ENCODE measurements at regions of chr9 and their contacts with region 1.

Region 1: GRCh38 chr9:32579706-32580331 is 6.9 kb upstream of the NDUFB6 start:
- DNase-seq: peak; percentile 67
- ATAC-seq: no peak
- H3K4me3 ChIP-seq: no peak overlapping the region
- H3K27ac ChIP-seq: no peak overlapping the region
- H3K4me1 ChIP-seq: no peaks in the 10 kb centered on the region; the same call in 1 of the 2 replicates
- H3K27me3 ChIP-seq: no peaks in the 10 kb centered on the region
- CTCF ChIP-seq: peak; percentile 86

Region 2: DNA sequence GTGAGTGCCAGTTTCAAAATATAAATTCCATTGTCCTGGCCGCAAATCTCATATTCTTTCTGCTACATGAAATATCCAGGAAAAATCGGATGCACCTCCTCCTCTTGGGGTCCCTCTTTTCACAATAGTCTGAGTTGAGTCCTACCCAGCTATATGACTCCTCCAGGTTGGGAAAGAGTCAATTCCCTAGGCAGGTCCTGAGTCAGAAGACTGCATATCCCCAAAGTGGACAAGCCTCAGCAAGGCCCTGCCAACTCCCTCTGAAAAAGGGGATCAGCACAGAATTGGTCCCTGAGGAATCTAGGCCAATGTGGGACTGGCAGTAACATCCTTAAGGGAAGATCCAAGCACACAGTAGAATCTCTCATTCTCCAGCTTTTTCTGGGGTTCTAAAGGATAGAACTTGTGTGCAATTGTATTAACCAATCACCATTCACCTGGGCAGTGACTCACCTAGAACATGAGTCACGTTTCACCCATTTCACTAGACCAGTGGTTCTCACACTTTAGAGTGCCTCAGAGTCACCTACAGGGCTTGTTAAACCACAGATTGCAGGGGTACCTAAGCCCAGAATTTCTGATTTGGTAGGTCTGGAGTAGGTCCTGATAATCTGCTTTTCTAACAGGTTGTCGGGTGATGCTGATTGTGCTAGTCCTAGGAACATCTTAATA is 158.8 kb after region 1 on chr9:
- CTCF ChIA-PET with region 1: no interaction called
- POLR2A ChIA-PET with region 1: no interaction called
- intact Hi-C with region 1: no loop called
- DNase-seq: peak; percentile 47
- ATAC-seq: peak; percentile 27; the same call in 1 of the 2 replicates
- H3K4me3 ChIP-seq: no peak overlapping the region
- H3K27ac ChIP-seq: no peak overlapping the region
- H3K4me1 ChIP-seq: peaks cover 19% of the 10 kb centered on the region
- H3K27me3 ChIP-seq: no peaks in the 10 kb centered on the region
- CTCF ChIP-seq: no peak

Region 3: DNA sequence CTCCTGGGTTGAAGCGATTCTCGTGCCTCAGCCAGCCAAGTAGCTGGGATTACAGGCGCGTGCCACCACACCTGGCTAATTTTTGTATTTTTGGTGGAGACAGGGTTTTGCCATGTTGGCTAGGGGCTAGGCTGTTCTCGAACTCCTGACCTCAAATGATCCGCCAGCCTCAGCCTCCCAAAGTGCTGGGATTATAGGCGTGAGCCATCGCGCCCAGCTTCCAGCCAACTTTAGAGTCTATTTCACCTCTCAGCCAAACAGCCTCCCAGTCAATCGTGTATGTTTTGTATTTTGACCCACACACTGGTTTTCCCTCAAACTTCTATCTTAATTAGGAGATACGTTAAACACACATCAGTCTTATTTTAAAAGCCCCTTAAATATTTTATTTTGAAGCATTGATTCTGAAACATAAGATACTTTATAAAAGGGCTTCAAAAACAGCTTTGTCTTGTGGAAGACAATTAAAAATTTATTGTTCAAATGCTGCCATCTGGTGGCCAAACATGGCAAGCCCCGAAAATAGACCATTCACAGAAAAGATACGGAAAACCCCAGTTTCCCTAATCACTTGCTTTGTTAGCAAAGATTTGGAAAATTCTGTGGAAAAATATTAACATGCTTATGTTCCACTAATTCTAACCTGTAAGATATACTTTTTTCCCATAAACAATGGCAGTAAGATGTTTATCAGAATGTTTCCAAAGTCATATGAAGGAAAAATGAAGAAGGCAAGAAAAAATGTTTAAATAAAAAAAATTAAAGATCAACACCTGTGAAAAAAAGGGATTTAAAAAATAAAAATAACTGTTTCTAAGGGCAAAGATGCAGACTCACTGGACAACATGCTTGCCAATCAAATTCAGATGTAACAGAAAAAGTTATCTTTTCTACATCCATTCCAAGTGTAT is 388.5 kb after region 1 on chr9:
- CTCF ChIA-PET with region 1: interaction called, 15 read pairs
- POLR2A ChIA-PET with region 1: no interaction called
- intact Hi-C with region 1: loop called (anchors 1 kb)
- DNase-seq: peak; percentile 67
- ATAC-seq: no peak
- H3K4me3 ChIP-seq: no peak overlapping the region
- H3K27ac ChIP-seq: no peak overlapping the region
- H3K4me1 ChIP-seq: no peaks in the 10 kb centered on the region
- H3K27me3 ChIP-seq: no peaks in the 10 kb centered on the region
- CTCF ChIP-seq: peak; percentile 79

Measured in PC-3 (cell line).